ENCODE measurements at regions of chr11 and their contacts with region 1.

Region 1: DNA sequence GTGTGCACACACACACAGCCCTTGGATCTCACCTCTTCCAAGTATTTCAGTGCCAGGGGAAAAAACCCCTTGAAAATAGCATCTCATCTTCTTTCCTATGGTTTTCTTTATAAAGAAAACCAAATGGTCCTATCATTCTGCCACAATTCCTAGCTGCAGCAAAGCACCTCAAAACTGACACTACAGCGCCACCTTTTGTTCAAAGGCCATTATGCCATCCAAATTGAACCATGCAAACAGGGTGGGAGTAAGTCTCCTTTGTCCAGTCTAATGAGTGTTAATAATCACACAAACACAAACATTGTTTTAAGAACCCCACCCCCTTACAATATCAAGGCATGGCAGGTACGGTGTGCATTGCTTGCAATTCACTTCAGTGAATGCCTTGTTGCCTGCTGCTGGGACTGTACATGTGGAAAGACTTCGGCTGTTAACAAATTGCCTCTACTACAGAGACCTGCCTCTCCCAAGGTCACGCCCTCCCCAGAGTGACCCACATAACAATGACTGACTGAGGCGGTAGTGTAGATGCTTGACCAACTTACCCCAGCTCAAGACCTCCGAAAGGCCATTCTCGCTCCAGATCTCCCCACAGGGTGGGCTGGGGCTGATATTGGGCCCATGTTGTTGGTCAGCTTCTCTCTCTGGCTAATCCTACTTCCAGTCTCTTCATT is 31.7 kb downstream of the FAM181B start:
- DNase-seq: no peak
- ATAC-seq: no peak
- H3K4me3 ChIP-seq: no peak overlapping the region
- H3K27ac ChIP-seq: no peak overlapping the region
- H3K4me1 ChIP-seq: no peaks in the 10 kb centered on the region
- H3K27me3 ChIP-seq: peaks cover 0 to 16% (median 0%) of the 10 kb centered on the region in 9 donors
- CTCF ChIP-seq: peak; percentile 13 to 66 (median 46)
- POLR2A ChIP-seq: no peak

Region 2: DNA sequence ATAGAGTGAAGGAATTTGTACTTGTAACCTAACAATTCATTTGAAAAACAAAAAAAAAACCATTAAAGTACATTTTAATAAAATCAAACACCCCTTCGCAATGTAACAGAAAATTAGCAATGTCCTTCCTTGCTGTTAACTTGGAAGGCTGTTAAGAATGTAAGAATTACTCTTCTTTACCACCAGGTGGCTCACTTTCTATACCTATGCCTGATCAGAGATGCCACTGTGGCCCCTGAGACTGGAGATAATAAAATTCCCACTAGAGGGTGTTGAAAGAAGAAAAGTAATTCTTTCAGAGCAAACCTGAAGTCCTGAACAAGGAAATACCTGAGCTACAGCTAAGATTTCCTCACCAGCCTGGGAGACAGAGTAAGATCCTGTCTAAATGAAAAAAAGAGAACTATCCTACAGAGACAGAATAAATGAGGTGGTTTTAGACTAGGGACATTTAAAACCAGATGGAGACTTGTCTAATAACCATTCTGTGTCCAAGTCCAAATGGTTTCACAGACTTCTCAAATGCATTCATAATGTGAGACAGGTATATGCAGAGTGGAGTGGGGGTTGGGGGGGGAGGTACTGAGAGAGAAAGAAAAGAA is 1057.6 kb before region 1 on chr11:
- intact Hi-C with region 1: loop called in 4 of 10 experiments (anchors 5 to 10 kb)
- DNase-seq: no peak
- ATAC-seq: no peak
- H3K4me3 ChIP-seq: no peak overlapping the region
- H3K27ac ChIP-seq: no peak overlapping the region
- H3K4me1 ChIP-seq: no peaks in the 10 kb centered on the region
- H3K27me3 ChIP-seq: no peaks in the 10 kb centered on the region
- CTCF ChIP-seq: peak; percentile 28 to 63 (median 43)
- POLR2A ChIP-seq: no peak

Region 3: GRCh38 chr11:82750643-82751139 is 48.7 kb after region 1 on chr11:
- intact Hi-C with region 1: loop called in 1 of 10 experiments (anchors 5 kb)
- DNase-seq: no peak
- ATAC-seq: no peak
- H3K4me3 ChIP-seq: no peak overlapping the region
- H3K27ac ChIP-seq: no peak overlapping the region
- H3K4me1 ChIP-seq: no peaks in the 10 kb centered on the region
- H3K27me3 ChIP-seq: no peaks in the 10 kb centered on the region
- CTCF ChIP-seq: no peak
- POLR2A ChIP-seq: no peak

Measured in heart left ventricle (tissue), 16 donors.